Caco-2 (cell line): ENCODE measurements at regions of chr11 and their contacts with region 1.

Region 1: GRCh38 chr11:19553683-19554333 is 158.8 kb upstream of the NAV2 start:
- DNase-seq: peak; percentile 73 to 80
- H3K4me3 ChIP-seq: no peak overlapping the region
- H3K4me3 Mint-ChIP-seq: no peak overlapping the region
- H3K27ac Mint-ChIP-seq: no peak overlapping the region
- H3K4me1 ChIP-seq: peaks cover 13% of the 10 kb centered on the region
- H3K4me1 Mint-ChIP-seq: peaks cover 8% of the 10 kb centered on the region
- H3K27me3 ChIP-seq: no peaks in the 10 kb centered on the region
- H3K27me3 Mint-ChIP-seq: no peaks in the 10 kb centered on the region
- CTCF ChIP-seq: peak; percentile 85 to 89

Region 2: GRCh38 chr11:19160847-19161246 is 393.0 kb before region 1 on chr11:
- CTCF ChIA-PET with region 1: no interaction called
- POLR2A ChIA-PET with region 1: no interaction called
- intact Hi-C with region 1: loop called (anchors 10 kb)
- DNase-seq: no peak
- H3K4me3 ChIP-seq: no peak overlapping the region
- H3K4me3 Mint-ChIP-seq: no peak overlapping the region
- H3K27ac Mint-ChIP-seq: no peak overlapping the region
- H3K4me1 ChIP-seq: 0 out of 2 replicates have a peak, but pooled peaks cover 6% of the 10 kb centered on the region
- H3K4me1 Mint-ChIP-seq: peaks cover 17% of the 10 kb centered on the region
- H3K27me3 ChIP-seq: no peaks in the 10 kb centered on the region
- H3K27me3 Mint-ChIP-seq: no peaks in the 10 kb centered on the region
- CTCF ChIP-seq: peak in 1 of 2 experiments; percentile 17

Region 3: GRCh38 chr11:19311308-19312030 is 242.3 kb before region 1 on chr11:
- CTCF ChIA-PET with region 1: no interaction called
- POLR2A ChIA-PET with region 1: no interaction called
- intact Hi-C with region 1: loop called (anchors 1 kb)
- DNase-seq: peak; percentile 56 to 83
- H3K4me3 ChIP-seq: no peak overlapping the region
- H3K4me3 Mint-ChIP-seq: no peak overlapping the region
- H3K27ac Mint-ChIP-seq: no peak overlapping the region
- H3K4me1 ChIP-seq: no peaks in the 10 kb centered on the region
- H3K4me1 Mint-ChIP-seq: no peaks in the 10 kb centered on the region
- H3K27me3 ChIP-seq: no peaks in the 10 kb centered on the region
- H3K27me3 Mint-ChIP-seq: no peaks in the 10 kb centered on the region
- CTCF ChIP-seq: peak; percentile 79 to 94

Region 4: DNA sequence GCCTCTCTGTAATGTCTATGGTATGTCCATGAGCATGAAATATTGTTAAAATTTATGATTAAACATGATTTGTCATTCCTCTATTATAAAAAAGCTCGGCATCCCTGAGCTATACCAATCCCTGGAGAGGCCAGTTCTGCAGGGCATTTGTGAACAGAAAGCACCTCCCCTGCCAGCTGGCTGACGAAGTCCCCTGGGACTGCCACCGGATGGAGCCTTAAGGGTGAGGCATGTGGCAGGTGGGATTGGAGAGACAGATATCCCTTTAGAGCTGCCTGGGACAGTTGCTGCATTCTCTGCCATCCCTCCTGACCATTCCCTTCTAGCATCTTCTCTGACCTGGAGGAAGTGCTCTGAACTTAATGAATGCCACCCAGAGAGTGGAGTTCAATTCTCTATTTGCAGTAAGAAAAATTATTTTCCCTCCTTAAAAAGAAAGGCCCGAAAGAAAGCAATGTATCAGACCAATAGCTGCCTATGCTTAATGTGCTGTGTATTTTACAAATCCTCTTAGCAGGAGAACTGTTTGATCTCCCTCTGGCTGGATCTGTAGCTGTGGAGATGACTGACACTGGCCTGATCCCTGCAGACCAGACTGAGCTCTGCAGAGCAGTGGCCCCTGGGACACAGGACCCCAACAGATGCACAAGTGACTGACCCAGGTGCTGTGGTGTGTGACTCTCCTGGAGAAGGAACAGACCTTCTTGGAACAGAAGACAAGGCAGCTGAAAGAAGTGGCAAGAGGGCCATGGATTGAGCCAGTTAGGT is 60.2 kb before region 1 on chr11:
- CTCF ChIA-PET with region 1: interaction called, 14 read pairs
- POLR2A ChIA-PET with region 1: no interaction called
- intact Hi-C with region 1: loop called (anchors 1 kb)
- DNase-seq: peak; percentile 66 to 71
- H3K4me3 ChIP-seq: no peak overlapping the region
- H3K4me3 Mint-ChIP-seq: no peak overlapping the region
- H3K27ac Mint-ChIP-seq: no peak overlapping the region
- H3K4me1 ChIP-seq: no peaks in the 10 kb centered on the region
- H3K4me1 Mint-ChIP-seq: no peaks in the 10 kb centered on the region
- H3K27me3 ChIP-seq: no peaks in the 10 kb centered on the region
- H3K27me3 Mint-ChIP-seq: no peaks in the 10 kb centered on the region
- CTCF ChIP-seq: peak in 1 of 2 experiments; percentile 55

Region 5: DNA sequence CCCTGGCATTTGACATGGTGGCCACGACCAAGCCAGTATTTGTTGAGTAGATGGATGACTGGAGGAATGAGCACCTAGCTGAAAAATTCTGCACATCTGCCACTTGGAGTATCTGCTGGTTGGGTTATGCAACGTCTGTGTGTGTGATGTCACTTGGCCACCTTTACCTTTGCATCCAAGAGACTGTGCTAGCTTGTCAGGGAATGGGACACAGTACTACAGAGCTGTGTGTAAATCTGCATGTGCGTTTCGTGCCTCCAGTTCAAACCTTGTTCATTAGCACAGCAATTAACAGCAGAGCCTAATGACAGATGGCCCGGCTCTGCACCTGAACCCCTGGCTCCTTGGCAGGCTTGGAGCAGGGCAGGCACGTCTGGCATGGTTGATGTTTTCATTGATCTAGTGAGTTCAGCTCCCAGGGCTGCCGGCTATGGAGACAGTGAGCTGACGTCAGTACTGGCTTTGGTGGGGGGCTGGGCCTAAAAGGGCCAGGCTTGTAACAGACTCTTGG is 29.6 kb before region 1 on chr11:
- CTCF ChIA-PET with region 1: interaction called, 3 read pairs
- POLR2A ChIA-PET with region 1: no interaction called
- intact Hi-C with region 1: loop called (anchors 1 kb)
- DNase-seq: peak; percentile 46 to 66
- H3K4me3 ChIP-seq: no peak overlapping the region
- H3K4me3 Mint-ChIP-seq: no peak overlapping the region
- H3K27ac Mint-ChIP-seq: peak overlapping the region; percentile 86
- H3K4me1 ChIP-seq: peaks cover 55% of the 10 kb centered on the region
- H3K4me1 Mint-ChIP-seq: peaks cover 55% of the 10 kb centered on the region
- H3K27me3 ChIP-seq: no peaks in the 10 kb centered on the region
- H3K27me3 Mint-ChIP-seq: no peaks in the 10 kb centered on the region
- CTCF ChIP-seq: no peak

Region 6: GRCh38 chr11:19614370-19614940 is 60.6 kb after region 1 on chr11:
- CTCF ChIA-PET with region 1: no interaction called
- POLR2A ChIA-PET with region 1: no interaction called
- intact Hi-C with region 1: no loop called
- DNase-seq: no peak
- H3K4me3 ChIP-seq: no peak overlapping the region
- H3K4me3 Mint-ChIP-seq: no peak overlapping the region
- H3K27ac Mint-ChIP-seq: no peak overlapping the region
- H3K4me1 ChIP-seq: no peaks in the 10 kb centered on the region
- H3K4me1 Mint-ChIP-seq: no peaks in the 10 kb centered on the region
- H3K27me3 ChIP-seq: no peaks in the 10 kb centered on the region
- H3K27me3 Mint-ChIP-seq: peaks cover 4% of the 10 kb centered on the region
- CTCF ChIP-seq: no peak

Region 7: DNA sequence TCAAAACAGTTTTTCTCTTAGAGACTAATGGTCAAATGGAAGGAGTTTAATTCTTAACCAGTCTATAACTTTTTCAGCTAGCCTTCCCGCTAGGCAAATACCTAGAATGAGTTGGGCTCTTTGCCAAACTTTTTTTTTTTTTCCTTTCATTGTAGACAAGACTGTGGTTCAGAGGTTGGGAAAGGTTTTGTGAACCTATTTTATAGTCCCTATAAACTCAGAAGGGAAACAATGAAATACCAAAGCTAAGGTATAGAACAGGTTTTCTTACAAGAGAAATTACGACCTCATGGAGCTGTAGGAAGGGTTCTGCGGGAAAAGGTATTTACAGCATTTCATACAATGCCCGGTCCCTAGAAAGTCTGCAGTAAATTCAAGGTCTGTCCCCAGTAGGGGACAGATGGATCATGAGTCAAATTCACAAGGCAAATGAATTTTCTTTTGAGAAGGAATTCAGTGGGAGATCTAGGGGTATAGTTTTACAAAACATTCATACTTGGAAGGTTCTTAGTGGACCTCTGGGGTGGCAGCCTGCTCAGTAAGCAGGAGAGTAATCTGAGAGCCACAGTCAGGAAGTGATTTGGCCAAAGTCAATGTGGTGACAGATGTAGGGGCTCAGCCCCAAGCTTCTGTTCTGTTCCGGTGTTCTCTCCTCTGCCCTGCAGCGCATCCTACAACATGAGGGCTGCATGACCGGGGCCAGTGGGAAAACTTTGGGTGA is 459.7 kb after region 1 on chr11:
- CTCF ChIA-PET with region 1: no interaction called
- POLR2A ChIA-PET with region 1: no interaction called
- intact Hi-C with region 1: no loop called
- DNase-seq: peak; percentile 50 to 53
- H3K4me3 ChIP-seq: no peak overlapping the region
- H3K4me3 Mint-ChIP-seq: peak overlapping the region; percentile 4
- H3K27ac Mint-ChIP-seq: peak overlapping the region; percentile 73
- H3K4me1 ChIP-seq: peaks cover 43% of the 10 kb centered on the region
- H3K4me1 Mint-ChIP-seq: peaks cover 25% of the 10 kb centered on the region
- H3K27me3 ChIP-seq: no peaks in the 10 kb centered on the region
- H3K27me3 Mint-ChIP-seq: no peaks in the 10 kb centered on the region
- CTCF ChIP-seq: peak in 1 of 2 experiments; percentile 23